CD14-positive monocyte (primary cell): ENCODE measurements at regions of chr5 and their contacts with region 1.

Region 1: DNA sequence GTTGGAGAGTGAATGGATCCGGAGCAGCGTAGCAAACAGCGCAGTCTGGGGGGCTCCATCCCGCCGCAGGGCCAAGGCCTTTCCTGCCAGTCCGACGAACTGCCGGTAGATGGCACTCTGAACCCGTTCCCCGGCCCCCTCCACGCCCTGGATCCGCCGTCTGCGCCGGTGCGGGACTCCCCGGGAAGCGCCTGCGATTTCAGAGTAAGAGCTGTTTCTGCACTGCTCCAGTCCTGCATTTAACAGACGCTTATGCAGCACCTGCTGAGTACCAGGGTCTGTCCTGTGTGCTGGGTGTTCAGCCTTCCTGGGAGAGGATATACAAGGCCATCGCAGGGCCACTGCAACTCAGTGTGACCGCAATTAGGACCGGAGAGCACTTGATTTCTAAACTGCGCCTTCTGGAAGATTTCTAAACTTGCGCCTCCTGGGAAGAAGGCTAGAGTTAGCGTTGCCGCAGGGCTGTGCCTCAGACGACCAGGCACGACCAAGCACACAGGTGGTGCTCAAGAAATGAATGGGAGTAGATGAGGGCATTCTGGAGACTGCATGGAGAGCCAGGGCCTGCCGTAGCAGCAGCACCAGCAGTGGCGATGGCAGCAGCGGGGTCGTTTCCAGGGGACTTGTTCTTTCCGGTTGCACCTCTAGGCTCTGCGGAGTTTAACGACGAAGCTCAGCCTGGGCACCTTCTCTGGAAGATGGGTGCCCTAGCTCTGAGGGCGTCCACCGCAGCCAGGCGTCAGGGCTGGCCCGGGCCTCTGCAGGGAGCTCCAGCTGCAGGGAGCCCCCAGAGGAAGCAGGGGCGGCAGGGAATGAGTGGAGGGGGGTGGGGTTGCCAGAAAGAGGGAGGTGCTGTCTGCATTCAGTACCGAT is 14.3 kb upstream of the TIFAB start:
- DNase-seq: peak; percentile 56 to 72 (median 62)
- H3K4me3 ChIP-seq: peak overlapping the region in 1 of 3 experiments; percentile 62
- H3K4me3 Mint-ChIP-seq: peak overlapping the region; percentile 74 to 95
- H3K27ac ChIP-seq: no peak overlapping the region
- H3K27ac Mint-ChIP-seq: no peak overlapping the region
- H3K4me1 ChIP-seq: peaks cover 11 to 16% of the 10 kb centered on the region in 2 donors
- H3K4me1 Mint-ChIP-seq: peaks cover 15% of the 10 kb centered on the region
- H3K27me3 ChIP-seq: peaks cover 5 to 46% of the 10 kb centered on the region in 2 donors
- H3K27me3 Mint-ChIP-seq: peaks cover 33 to 53% (median 43%) of the 10 kb centered on the region in 3 donors
- CTCF ChIP-seq: peak; percentile 81

Region 2: GRCh38 chr5:135398853-135399523 is 67.4 kb before region 1 on chr5 and contains the start of gene MACROH2A1:
- intact Hi-C with region 1: no loop called
- DNase-seq: peak; percentile 87 to 89 (median 87)
- H3K4me3 ChIP-seq: peak within 1 kb of the TSS; percentile 79 to 96 (median 96)
- H3K4me3 Mint-ChIP-seq: peak within 1 kb of the TSS; percentile 92 to 96
- H3K27ac ChIP-seq: peak within 1 kb of the TSS; percentile 96
- H3K27ac Mint-ChIP-seq: peak within 1 kb of the TSS; percentile 95 to 100 (median 99)
- H3K4me1 ChIP-seq: peaks cover 58 to 60% of the 10 kb centered on the region in 2 donors
- H3K4me1 Mint-ChIP-seq: peaks cover 58% of the 10 kb centered on the region
- H3K27me3 ChIP-seq: no peaks in the 10 kb centered on the region
- H3K27me3 Mint-ChIP-seq: no peaks in the 10 kb centered on the region
- CTCF ChIP-seq: no peak
- polyA plus RNA-seq, gene MACROH2A1: 352 to 443 (median 440) TPM

Region 3: GRCh38 chr5:135543485-135544304 is 77.3 kb after region 1 on chr5:
- intact Hi-C with region 1: loop called in 1 of 2 experiments (anchors 2 kb)
- DNase-seq: peak in 2 of 3 donors; percentile 6 to 17
- H3K4me3 ChIP-seq: peak overlapping the region; percentile 20 to 75 (median 43)
- H3K4me3 Mint-ChIP-seq: peak overlapping the region; percentile 86 to 91
- H3K27ac ChIP-seq: no peak overlapping the region
- H3K27ac Mint-ChIP-seq: no peak overlapping the region
- H3K4me1 ChIP-seq: peaks cover 13 to 19% of the 10 kb centered on the region in 2 donors
- H3K4me1 Mint-ChIP-seq: peaks cover 23% of the 10 kb centered on the region
- H3K27me3 ChIP-seq: peaks cover 90 to 100% of the 10 kb centered on the region in 2 donors
- H3K27me3 Mint-ChIP-seq: peaks cover 96 to 99% (median 96%) of the 10 kb centered on the region in 3 donors
- CTCF ChIP-seq: no peak

Region 4: DNA sequence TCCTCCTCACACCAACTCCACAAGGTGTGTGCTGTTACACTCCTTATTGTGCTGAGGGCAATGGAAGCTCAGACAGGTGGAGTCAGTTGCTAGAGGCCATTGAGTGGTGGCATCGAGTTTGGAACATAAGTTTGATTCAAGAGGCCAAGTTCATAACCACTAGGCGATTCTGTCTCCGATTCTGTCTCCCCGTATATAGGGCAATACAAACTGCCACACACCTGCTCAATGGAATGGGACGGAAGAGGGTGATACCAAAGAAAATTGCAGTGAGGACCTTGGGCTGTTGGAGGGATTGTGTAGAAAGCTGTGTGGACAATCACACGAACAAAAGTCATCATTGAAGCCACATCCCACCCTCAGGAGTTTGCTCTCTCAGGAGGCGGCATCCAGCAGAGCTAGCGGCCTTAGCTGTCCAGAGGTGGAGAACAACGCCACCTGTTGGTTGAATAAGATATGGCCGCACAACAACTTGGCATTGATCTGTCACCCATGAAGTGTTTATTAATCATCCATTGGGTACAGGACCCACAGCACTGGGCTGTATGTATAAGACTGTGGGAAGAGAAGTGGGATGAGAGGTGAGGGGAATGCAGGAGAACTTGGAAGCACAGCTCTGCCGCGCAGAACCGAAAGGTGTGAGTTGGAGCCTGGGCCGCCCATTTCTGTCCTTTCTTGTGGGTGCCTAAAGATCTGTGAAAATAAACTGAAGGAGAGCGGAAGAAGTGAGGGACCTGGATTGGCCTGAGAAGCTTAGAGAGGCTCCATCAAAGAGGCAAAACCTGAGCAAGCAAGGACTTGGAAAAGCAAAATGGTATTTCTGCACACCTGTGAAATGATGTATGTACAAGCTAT is 85.4 kb after region 1 on chr5:
- intact Hi-C with region 1: loop called (anchors 2 kb)
- DNase-seq: peak; percentile 55 to 68 (median 63)
- H3K4me3 ChIP-seq: no peak overlapping the region
- H3K4me3 Mint-ChIP-seq: peak overlapping the region in 1 of 2 donors; percentile 23
- H3K27ac ChIP-seq: no peak overlapping the region
- H3K27ac Mint-ChIP-seq: peak overlapping the region in 1 of 7 donors; percentile 17
- H3K4me1 ChIP-seq: no peaks in the 10 kb centered on the region
- H3K4me1 Mint-ChIP-seq: peaks cover 3% of the 10 kb centered on the region
- H3K27me3 ChIP-seq: peaks cover 36 to 71% of the 10 kb centered on the region in 2 donors
- H3K27me3 Mint-ChIP-seq: peaks cover 60 to 73% (median 69%) of the 10 kb centered on the region in 3 donors
- CTCF ChIP-seq: peak; percentile 91

Region 5: DNA sequence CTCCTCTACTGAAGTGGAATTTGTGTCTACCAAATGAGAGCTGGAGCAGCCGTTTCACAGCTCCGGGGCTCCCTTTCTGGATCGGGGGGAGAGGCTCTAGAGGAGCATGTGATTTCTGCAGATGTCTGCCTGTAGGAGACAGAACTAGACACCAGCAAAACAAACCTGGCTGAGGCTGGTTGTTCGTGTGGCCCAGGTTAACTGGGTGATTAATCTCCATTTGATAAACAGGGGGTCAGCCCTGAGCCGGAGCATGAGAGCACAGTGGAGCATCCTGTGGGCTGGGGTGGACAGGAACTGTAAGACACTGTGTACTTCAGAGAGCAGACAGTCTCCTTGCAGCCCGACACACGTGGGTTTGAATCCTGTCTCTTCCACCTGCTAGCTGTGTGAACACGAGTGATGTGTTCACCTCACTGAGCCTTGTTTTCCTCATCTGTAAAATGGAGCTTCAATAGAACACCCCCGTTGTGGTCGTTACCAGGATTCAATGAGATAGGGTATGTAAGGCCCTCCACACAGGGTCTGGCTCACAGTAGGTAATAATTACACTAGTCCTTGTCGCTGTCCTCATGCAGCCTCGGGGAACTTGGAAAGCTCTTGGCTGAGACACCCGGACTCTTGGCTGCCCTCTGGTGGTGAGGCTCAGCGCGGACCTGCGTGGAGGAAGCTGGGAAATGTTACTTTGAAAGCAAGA is 99.5 kb after region 1 on chr5:
- intact Hi-C with region 1: loop called in 1 of 2 experiments (anchors 5 kb)
- DNase-seq: peak; percentile 39 to 64 (median 46)
- H3K4me3 ChIP-seq: no peak overlapping the region
- H3K4me3 Mint-ChIP-seq: peak overlapping the region in 1 of 2 donors; percentile 39
- H3K27ac ChIP-seq: no peak overlapping the region
- H3K27ac Mint-ChIP-seq: no peak overlapping the region
- H3K4me1 ChIP-seq: no peaks in the 10 kb centered on the region
- H3K4me1 Mint-ChIP-seq: peaks cover 4% of the 10 kb centered on the region
- H3K27me3 ChIP-seq: peaks cover 0 to 4% of the 10 kb centered on the region in 2 donors
- H3K27me3 Mint-ChIP-seq: peaks cover 14 to 26% (median 21%) of the 10 kb centered on the region in 3 donors
- CTCF ChIP-seq: peak; percentile 93